HepG2 (cell line): ENCODE measurements at regions of chr2 and their contacts with region 1.

Region 1: GRCh38 chr2:32946314-32947075 is at the start of gene LTBP1:
- DNase-seq: peak; percentile 42
- ATAC-seq: peak; percentile 96
- H3K4me3 ChIP-seq: peak within 1 kb of the TSS; percentile 27 to 72 (median 54)
- H3K27ac ChIP-seq: no peak within 1 kb of the TSS
- H3K4me1 ChIP-seq: no peaks in the 10 kb centered on the region
- H3K27me3 ChIP-seq: peaks cover 6 to 35% of the 10 kb centered on the region in 2 experiments; a peak in 4 of 5 replicates
- CTCF ChIP-seq: peak; percentile 92
- EP300 ChIP-seq: no peak
- POLR2A ChIP-seq: no peak
- RAD21 ChIP-seq: peak; percentile 84
- total RNA-seq, gene LTBP1: 0.22 and 0.34 TPM in 2 replicates

Region 2: DNA sequence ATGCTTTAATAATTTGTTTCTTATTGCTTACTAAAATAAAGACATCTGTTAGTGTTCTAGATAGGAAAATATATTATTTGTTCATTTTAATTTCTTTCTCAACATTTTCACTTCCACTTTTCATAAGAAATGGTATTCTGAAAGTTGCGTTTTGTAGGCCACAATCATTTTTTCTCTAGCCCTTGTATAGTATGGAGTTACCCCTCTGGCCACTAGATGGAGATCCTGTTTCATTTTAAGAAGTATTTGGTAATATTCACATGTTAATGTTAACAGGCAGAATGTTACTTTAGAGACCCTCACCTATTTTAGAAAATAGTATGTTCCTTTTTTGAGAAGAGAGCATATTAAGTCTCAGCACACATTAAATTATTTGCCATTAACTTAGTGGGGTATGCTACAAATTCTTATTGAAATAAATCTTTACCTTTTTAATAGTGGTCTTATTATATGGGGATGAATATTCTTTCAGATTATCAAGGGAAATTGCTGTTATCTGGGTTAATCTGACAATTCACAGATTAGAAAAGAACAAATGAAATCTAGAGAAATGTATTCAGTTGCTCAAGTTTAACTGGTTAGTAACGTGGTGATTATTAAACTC is 392.6 kb before region 1 on chr2:
- CTCF ChIA-PET with region 1: no interaction called
- POLR2A ChIA-PET with region 1: no interaction called
- in situ Hi-C with region 1: loop called (anchors 10 kb)
- intact Hi-C with region 1: loop called (anchors 5 kb)
- DNase-seq: peak; percentile 43
- ATAC-seq: peak; percentile 95
- H3K4me3 ChIP-seq: no peak overlapping the region
- H3K27ac ChIP-seq: no peak overlapping the region
- H3K4me1 ChIP-seq: no peaks in the 10 kb centered on the region
- H3K27me3 ChIP-seq: no peaks in the 10 kb centered on the region
- CTCF ChIP-seq: peak; percentile 66
- EP300 ChIP-seq: no peak
- POLR2A ChIP-seq: no peak
- RAD21 ChIP-seq: no peak